Caco-2 (cell line): ENCODE measurements at regions of chr10 and their contacts with region 1.

Region 1: DNA sequence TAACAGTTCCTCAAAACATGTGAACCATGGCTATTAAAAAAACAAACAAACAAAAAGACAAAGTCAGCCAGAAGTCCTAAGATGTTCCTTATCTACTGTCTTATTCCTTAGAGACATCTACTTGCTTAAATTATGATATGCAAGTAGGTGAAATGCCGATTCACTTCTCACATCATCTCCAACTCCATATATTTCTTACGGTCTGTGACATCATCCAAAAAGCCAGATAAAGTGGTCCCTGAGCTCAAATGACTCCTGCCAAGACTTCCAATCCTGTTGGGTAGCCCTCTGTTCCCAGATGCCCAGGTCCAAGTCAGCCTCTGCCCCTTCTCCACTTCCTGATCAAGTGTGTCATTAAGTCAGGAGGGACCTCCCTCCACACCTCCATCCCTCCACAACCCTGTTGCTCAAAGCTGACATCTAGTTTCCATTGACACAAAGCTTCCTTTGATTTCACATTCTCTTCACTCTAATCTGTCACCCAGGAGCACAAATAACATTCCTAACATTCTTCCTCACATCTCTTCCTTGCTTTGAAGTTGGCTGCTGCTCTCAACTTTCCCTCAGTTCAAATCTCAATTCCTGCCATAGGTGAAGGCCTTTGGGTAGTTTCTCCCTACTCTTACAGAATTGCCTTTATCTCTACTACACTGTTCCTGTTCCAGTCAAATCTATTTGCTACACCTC is 56.1 kb upstream of the PDLIM1 start:
- DNase-seq: peak; percentile 87 to 89
- H3K4me3 ChIP-seq: no peak overlapping the region
- H3K4me3 Mint-ChIP-seq: peak overlapping the region; percentile 57
- H3K27ac Mint-ChIP-seq: peak overlapping the region; percentile 93
- H3K4me1 ChIP-seq: peaks cover 66% of the 10 kb centered on the region
- H3K4me1 Mint-ChIP-seq: peaks cover 45% of the 10 kb centered on the region
- H3K27me3 ChIP-seq: no peaks in the 10 kb centered on the region
- H3K27me3 Mint-ChIP-seq: no peaks in the 10 kb centered on the region
- CTCF ChIP-seq: no peak

Region 2: DNA sequence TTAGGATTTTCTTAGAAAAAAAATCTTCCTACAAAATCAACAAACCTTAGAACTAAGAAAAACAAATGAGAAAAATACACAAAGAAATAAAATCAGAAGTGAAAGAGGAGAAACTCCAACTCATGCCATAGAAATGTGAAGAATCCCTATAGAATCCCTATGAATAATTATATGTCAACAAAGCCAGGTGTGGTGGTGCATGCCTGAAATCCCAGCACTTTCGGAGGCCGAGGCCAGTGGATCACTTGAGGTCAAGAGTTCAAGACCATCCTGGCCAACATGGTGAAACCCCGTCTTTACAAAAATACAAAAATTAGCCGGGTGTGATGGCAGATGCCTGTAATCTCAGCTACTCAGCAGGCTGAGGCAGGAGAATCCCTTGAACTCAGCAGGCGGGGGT is 125.7 kb before region 1 on chr10:
- CTCF ChIA-PET with region 1: no interaction called
- POLR2A ChIA-PET with region 1: no interaction called
- intact Hi-C with region 1: no loop called
- DNase-seq: peak; percentile 65 to 76
- H3K4me3 ChIP-seq: no peak overlapping the region
- H3K4me3 Mint-ChIP-seq: no peak overlapping the region
- H3K27ac Mint-ChIP-seq: peak overlapping the region; percentile 76
- H3K4me1 ChIP-seq: peaks cover 28% of the 10 kb centered on the region
- H3K4me1 Mint-ChIP-seq: no peaks in the 10 kb centered on the region
- H3K27me3 ChIP-seq: no peaks in the 10 kb centered on the region
- H3K27me3 Mint-ChIP-seq: no peaks in the 10 kb centered on the region
- CTCF ChIP-seq: no peak

Region 3: DNA sequence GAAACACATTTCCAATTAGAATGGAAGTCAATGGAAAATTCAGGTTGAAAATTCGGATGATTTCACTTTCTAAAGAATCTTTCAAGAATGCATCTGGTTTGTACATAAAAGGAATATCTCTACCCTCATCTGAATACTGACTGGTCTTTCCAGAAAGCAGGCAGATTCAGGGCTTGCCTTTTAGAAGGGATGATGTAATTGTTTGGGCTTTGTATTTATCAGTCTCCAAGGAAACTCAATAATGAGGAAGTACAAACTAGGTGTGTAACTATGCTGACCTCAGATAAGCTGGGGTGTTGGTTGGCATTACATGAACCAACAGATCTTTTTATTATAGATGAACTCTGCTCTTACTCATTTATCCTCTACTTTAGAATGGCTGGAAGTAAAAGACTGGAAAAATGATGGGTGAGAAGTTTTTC is 80.2 kb before region 1 on chr10:
- CTCF ChIA-PET with region 1: no interaction called
- POLR2A ChIA-PET with region 1: interaction called, 3 read pairs
- intact Hi-C with region 1: loop called (anchors 1 kb)
- DNase-seq: peak; percentile 68 to 83
- H3K4me3 ChIP-seq: no peak overlapping the region
- H3K4me3 Mint-ChIP-seq: peak overlapping the region; percentile 63
- H3K27ac Mint-ChIP-seq: peak overlapping the region; percentile 98
- H3K4me1 ChIP-seq: peaks cover 71% of the 10 kb centered on the region
- H3K4me1 Mint-ChIP-seq: peaks cover 58% of the 10 kb centered on the region
- H3K27me3 ChIP-seq: no peaks in the 10 kb centered on the region
- H3K27me3 Mint-ChIP-seq: no peaks in the 10 kb centered on the region
- CTCF ChIP-seq: no peak

Region 4: GRCh38 chr10:95406651-95407280 is 59.9 kb after region 1 on chr10:
- CTCF ChIA-PET with region 1: no interaction called
- POLR2A ChIA-PET with region 1: no interaction called
- intact Hi-C with region 1: no loop called
- DNase-seq: no peak
- H3K4me3 ChIP-seq: no peak overlapping the region
- H3K4me3 Mint-ChIP-seq: no peak overlapping the region
- H3K27ac Mint-ChIP-seq: no peak overlapping the region
- H3K4me1 ChIP-seq: no peaks in the 10 kb centered on the region
- H3K4me1 Mint-ChIP-seq: no peaks in the 10 kb centered on the region
- H3K27me3 ChIP-seq: no peaks in the 10 kb centered on the region
- H3K27me3 Mint-ChIP-seq: no peaks in the 10 kb centered on the region
- CTCF ChIP-seq: no peak